ENCODE measurements at regions of chr2 and their contacts with region 1.

Region 1: GRCh38 chr2:201451292-201452057 is at the starts of genes STRADB and TRAK2:
- DNase-seq: peak; percentile 97
- ATAC-seq: peak; percentile 90 to 92
- H3K4me3 ChIP-seq: peak within 1 kb of the TSS; percentile 77 to 97 (median 87)
- H3K27ac ChIP-seq: peak within 1 kb of the TSS; percentile 91 to 94 (median 94)
- H3K4me1 ChIP-seq: peaks cover 37 to 44% of the 10 kb centered on the region in 2 donors
- H3K27me3 ChIP-seq: no peaks in the 10 kb centered on the region
- CTCF ChIP-seq: peak; percentile 36 to 53 (median 45)
- POLR2A ChIP-seq: peak; percentile 83 to 88
- total RNA-seq, gene STRADB: 90.6 to 187 (median 129) TPM
- total RNA-seq, gene TRAK2: 16.1 to 46.7 (median 26.5) TPM

Region 2: DNA sequence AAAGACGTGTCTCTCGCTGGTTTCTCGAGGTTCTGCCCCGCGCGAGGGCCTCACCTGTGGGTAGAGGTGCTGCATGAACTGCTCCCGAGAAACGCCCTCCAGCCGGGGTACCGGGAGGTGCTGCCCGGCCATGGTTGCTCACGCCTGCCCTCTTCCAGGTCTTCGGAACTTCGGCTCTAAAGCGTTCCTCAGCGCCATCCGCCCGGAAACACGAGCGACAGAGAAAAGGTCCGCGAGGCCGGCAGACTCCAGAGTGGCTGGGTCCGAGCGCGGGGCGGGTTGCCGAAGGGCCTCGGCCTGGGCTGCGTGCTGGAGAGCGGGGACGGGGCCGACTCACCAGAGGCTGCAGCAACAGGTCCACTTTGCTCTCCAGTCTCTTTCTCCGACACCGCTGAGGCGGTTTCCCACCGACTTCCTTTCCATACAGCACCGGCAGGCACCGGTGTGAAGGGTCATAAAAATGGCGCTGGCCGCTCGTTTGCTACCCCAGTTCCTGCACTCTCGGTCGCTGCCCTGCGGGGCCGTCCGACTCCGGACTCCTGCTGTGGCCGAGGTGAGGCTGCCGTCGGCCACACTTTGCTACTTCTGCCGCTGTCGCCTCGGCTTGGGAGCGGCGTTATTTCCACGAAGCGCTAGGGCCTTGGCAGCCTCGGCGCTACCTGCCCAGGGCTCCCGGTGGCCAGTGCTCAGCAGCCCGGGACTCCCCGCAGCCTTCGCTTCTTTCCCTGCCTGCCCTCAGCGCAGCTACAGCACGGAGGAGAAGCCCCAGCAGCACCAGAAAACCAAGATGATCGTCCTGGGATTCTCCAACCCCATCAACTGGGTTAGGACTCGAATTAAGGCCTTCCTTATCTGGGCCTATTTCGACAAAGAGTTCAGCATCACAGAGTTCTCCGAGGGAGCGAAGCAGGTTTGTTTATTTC is 1495.9 kb before region 1 on chr2 and contains the starts of genes MAIP1 and TYW5:
- in situ Hi-C with region 1: no loop called
- intact Hi-C with region 1: loop called (anchors 10 kb)
- DNase-seq: peak; percentile 68 to 72
- ATAC-seq: peak; percentile 98
- H3K4me3 ChIP-seq: peak within 1 kb of the TSS; percentile 83 to 94 (median 90)
- H3K27ac ChIP-seq: peak within 1 kb of the TSS; percentile 86 to 94 (median 90)
- H3K4me1 ChIP-seq: peaks cover 33% of the 10 kb centered on the region in 2 donors
- H3K27me3 ChIP-seq: no peaks in the 10 kb centered on the region
- CTCF ChIP-seq: peak in 3 of 5 experiments; percentile 34 to 43 (median 34)
- POLR2A ChIP-seq: peak; percentile 24 to 56
- total RNA-seq, gene MAIP1: 21.9 to 40.2 (median 26.6) TPM
- total RNA-seq, gene TYW5: 1.7 to 4.5 (median 3.8) TPM

Region 3: DNA sequence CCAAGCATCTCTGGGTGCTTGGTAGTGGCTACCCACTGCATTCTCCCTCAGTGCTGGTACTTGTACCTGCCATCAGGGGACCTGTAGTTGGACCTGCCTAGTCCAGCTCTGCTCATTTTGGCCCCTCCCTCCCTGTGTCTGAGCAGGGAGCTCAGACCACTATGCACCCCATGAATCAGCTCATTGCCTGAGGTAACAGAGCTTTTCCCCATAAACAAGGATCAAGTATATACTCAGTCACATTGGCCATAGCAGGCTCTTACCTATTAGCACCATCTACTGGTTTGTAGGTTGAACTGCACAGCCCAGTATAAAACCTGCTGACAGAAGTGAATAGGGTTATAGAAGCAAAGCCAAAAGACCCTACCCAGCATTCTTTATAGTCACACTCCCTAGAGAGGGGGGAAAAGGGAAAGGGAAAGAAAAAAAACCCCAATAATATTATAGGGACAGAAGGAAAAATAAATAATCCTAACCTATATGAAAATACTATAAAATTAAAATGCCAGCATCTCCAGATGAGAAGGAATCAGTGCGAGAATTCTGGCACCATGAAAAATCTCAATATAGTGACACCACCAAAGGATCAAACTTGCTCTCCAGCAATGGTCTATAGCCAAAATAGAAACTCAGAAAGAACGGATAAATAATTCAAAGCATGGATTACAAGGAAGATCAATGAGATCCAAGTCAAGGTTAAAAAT is 87.5 kb before region 1 on chr2:
- in situ Hi-C with region 1: no loop called
- intact Hi-C with region 1: no loop called
- DNase-seq: no peak
- ATAC-seq: peak; percentile 39 to 74
- H3K4me3 ChIP-seq: no peak overlapping the region
- H3K27ac ChIP-seq: no peak overlapping the region
- H3K4me1 ChIP-seq: no peaks in the 10 kb centered on the region
- H3K27me3 ChIP-seq: no peaks in the 10 kb centered on the region
- CTCF ChIP-seq: peak in 4 of 5 experiments; percentile 56 to 73 (median 61)
- POLR2A ChIP-seq: no peak

Region 4: DNA sequence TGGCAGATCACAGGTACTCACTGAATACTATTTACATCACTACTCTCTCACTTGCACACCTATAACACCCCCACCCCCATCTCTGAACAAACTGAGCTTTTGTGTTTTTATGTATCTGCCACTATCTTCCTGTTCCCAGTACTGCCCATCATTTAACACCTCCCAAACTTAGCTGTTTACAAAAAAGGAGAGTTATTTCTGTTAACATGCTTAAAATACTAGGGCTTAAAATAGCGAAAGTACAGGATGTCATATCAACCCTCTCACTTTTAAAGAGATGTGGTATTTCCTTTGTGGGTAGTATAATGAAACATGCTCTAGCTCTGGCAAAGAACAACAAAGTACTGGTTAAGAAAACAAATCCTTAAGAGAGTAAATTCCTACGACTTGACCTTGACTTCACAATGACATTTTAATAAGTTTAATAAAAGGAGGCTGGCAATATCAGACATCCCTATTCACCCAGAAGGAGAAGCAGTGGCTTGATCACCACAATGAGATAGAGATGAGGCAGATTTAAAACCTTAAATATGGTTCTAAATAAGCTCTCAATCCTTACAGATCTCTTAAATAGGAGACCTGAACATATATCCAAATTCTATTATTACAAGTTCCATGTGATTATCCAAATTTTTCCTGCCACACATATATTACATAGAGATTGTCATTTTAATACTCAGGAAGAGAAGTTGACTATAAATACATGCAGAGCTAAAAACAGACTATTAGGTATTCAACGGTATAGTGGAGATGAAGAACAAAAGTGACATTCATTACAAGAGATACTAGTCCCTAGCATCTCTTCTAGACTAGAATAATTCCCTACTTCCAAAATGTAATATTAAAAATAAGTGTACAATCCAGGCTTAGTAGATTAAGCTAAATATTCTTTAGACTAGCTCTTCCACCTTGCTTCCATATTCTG is 37.1 kb before region 1 on chr2:
- in situ Hi-C with region 1: no loop called
- intact Hi-C with region 1: loop called (anchors 1 kb)
- DNase-seq: no peak
- ATAC-seq: peak; percentile 53 to 60
- H3K4me3 ChIP-seq: peak overlapping the region in 3 of 4 donors; percentile 3 to 22 (median 14)
- H3K27ac ChIP-seq: peak overlapping the region; percentile 37 to 65 (median 60)
- H3K4me1 ChIP-seq: peaks cover 45 to 60% of the 10 kb centered on the region in 2 donors
- H3K27me3 ChIP-seq: no peaks in the 10 kb centered on the region
- CTCF ChIP-seq: no peak
- POLR2A ChIP-seq: no peak

Region 5: DNA sequence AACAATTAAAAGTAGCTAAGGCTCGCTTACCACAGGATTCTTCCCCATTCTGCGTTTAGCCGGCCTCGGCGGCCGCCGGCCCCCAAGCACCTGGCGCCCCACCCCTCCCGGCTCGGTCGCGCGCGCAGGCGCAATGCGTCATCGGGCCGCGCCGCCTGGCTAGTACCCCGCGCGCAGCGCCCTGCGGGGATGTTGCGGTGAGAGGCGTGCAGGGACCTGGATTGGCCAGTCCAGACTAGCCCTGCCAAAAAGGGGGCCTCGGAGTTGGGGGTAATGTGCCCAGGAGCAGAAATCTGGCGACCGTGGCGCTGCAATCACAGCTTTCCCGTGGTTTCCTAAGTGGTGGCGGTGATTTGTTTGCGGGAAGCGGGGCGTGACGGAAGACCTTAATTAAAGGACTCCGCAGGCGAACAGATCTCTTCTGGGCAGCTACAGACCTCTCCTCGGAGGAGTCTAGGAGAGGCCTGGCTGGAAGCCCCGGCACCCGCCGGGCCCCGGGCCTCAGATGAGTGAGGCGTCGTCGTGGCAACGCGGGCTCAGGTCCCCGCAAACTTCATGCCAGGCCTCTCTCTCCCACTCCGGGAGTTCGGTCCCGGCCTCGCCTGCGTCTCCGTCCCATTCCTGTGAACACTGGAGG is 191.2 kb after region 1 on chr2:
- in situ Hi-C with region 1: no loop called
- intact Hi-C with region 1: loop called (anchors 2 kb)
- DNase-seq: peak; percentile 53 to 71
- ATAC-seq: peak; percentile 88 to 90
- H3K4me3 ChIP-seq: peak overlapping the region; percentile 75 to 98 (median 93)
- H3K27ac ChIP-seq: peak overlapping the region; percentile 90 to 96 (median 94)
- H3K4me1 ChIP-seq: peaks cover 15 to 16% of the 10 kb centered on the region in 2 donors
- H3K27me3 ChIP-seq: no peaks in the 10 kb centered on the region
- CTCF ChIP-seq: peak in 3 of 5 experiments; percentile 3 to 27 (median 25)
- POLR2A ChIP-seq: peak; percentile 65 to 73

Region 6: GRCh38 chr2:201780674-201781581 is 329.5 kb after region 1 on chr2 and contains the start of gene ALS2:
- in situ Hi-C with region 1: loop called in 1 of 4 experiments (anchors 10 kb)
- intact Hi-C with region 1: no loop called
- DNase-seq: peak; percentile 95 to 98
- ATAC-seq: peak; percentile 99 to 100
- H3K4me3 ChIP-seq: peak within 1 kb of the TSS; percentile 69 to 97 (median 88)
- H3K27ac ChIP-seq: peak within 1 kb of the TSS; percentile 88 to 92 (median 90)
- H3K4me1 ChIP-seq: peaks cover 29 to 31% of the 10 kb centered on the region in 2 donors
- H3K27me3 ChIP-seq: no peaks in the 10 kb centered on the region
- CTCF ChIP-seq: no peak
- POLR2A ChIP-seq: peak; percentile 62 to 67
- total RNA-seq, gene ALS2: 17.1 to 40.6 (median 19.5) TPM

Measured in gastrocnemius medialis (tissue), 4 donors.